Astrocyte of the cerebellum (primary cell): ENCODE measurements at regions of chr6 and their contacts with region 1.

Region 1: DNA sequence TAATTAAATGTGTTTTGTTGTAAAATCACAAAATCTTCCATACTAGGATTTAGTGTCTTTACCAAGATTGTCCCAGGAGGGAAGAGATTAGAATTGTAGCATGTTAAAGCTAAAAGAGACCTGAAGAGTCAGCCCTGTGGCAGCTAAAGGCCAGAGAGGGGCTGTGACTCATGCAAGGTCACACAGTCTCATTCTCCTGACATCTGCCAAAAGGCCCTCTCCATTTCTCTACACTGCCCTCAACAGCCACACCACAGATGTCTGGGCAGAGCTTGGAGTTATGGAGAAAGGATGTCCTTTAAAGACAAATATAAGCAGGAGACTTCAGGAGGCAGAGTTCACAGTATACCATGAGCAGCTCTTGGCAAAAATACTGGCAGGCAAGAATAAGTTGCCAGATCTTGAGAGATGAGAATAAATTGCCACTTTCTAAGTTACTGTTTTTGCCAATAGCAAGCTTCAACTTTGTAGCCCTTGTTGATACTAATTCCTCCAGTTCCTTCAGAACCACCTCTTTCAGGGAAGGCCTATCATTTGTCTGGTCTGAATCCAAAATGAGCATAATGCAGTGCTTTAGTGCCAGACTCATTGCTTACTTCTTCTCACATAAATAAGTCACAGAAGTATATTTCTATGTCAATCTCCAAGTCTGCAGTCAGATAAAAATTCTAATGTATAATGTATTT is 41.7 kb downstream of the AKIRIN2 start:
- DNase-seq: no peak
- H3K4me3 ChIP-seq: no peak overlapping the region
- CTCF ChIP-seq: no peak

Region 2: GRCh38 chr6:87742106-87742505 is 81.7 kb after region 1 on chr6:
- in situ Hi-C with region 1: loop called (anchors 5 kb)
- DNase-seq: no peak
- H3K4me3 ChIP-seq: no peak overlapping the region
- CTCF ChIP-seq: no peak

Region 3: GRCh38 chr6:87772597-87773530 is 112.5 kb after region 1 on chr6:
- in situ Hi-C with region 1: no loop called
- DNase-seq: no peak
- H3K4me3 ChIP-seq: no peak overlapping the region
- CTCF ChIP-seq: no peak